ENCODE measurements at regions of chr1 and their contacts with region 1.

Region 1: GRCh38 chr1:28552758-28553663 is at the start of gene TRNAU1AP:
- DNase-seq: peak; percentile 98
- H3K4me3 Mint-ChIP-seq: peak within 1 kb of the TSS; percentile 99
- H3K27ac Mint-ChIP-seq: peak within 1 kb of the TSS; percentile 97
- H3K4me1 Mint-ChIP-seq: peaks cover 18% of the 10 kb centered on the region
- H3K27me3 Mint-ChIP-seq: no peaks in the 10 kb centered on the region
- total RNA-seq, gene TRNAU1AP: 40.2 and 41.0 TPM in 2 replicates

Region 2: DNA sequence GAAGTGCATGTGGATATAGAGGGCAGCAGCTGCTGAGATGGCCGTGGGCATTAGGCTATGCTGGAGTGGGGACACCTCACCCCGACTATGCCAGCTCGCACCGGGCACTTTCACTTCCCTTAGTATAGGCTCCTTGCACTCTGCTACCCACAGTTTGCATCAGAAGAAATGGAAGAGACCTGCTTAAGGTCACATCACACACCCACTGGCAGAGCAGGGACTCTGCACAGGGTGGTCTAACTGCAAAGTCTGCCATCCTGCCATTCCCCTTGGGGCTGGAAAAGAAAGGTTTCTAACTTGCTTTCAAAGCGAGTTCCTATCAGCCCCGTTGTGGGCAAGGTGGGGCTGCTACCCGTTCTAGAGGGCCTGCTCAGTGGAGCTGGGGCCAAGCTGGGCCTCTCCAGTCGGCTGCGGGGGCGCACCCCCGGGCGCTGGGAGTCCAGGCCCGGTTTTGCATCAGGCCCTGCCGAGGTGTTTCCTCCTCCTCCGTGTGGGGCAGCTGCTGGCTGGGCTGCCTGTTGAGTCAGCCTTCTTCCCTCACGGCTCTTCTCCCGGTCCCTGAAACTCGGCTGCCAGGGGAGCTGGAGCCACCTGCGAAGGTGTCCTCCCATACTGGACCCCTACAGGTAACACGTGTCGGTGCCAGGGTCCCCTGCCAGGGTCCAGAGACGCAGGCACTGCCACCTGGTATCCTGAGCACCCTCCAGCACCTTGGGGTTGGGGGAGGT is 1211.3 kb before region 1 on chr1 and contains the start of gene SYTL1:
- intact Hi-C with region 1: loop called (anchors 5 kb)
- DNase-seq: peak; percentile 63
- H3K4me3 Mint-ChIP-seq: peak within 1 kb of the TSS; percentile 93
- H3K27ac Mint-ChIP-seq: peak within 1 kb of the TSS; percentile 99
- H3K4me1 Mint-ChIP-seq: peaks cover 59% of the 10 kb centered on the region
- H3K27me3 Mint-ChIP-seq: no peaks in the 10 kb centered on the region
- total RNA-seq, gene SYTL1: 24.4 and 26.3 TPM in 2 replicates

Region 3: GRCh38 chr1:28369371-28370238 is 183.4 kb before region 1 on chr1 and contains the start of gene PHACTR4:
- intact Hi-C with region 1: loop called (anchors 1 kb)
- DNase-seq: peak; percentile 78
- H3K4me3 Mint-ChIP-seq: peak within 1 kb of the TSS; percentile 91
- H3K27ac Mint-ChIP-seq: peak within 1 kb of the TSS; percentile 95
- H3K4me1 Mint-ChIP-seq: peaks cover 36% of the 10 kb centered on the region
- H3K27me3 Mint-ChIP-seq: peaks cover 3% of the 10 kb centered on the region
- total RNA-seq, gene PHACTR4: 28.9 and 31.8 TPM in 2 replicates

Region 4: GRCh38 chr1:28518000-28518744 is 34.8 kb before region 1 on chr1:
- intact Hi-C with region 1: loop called (anchors 1 kb)
- DNase-seq: peak; percentile 86
- H3K4me3 Mint-ChIP-seq: peak overlapping the region; percentile 92
- H3K27ac Mint-ChIP-seq: peak overlapping the region; percentile 92
- H3K4me1 Mint-ChIP-seq: peaks cover 33% of the 10 kb centered on the region
- H3K27me3 Mint-ChIP-seq: no peaks in the 10 kb centered on the region

Region 5: GRCh38 chr1:28642847-28643635 is 90.0 kb after region 1 on chr1 and contains the start of gene TAF12:
- intact Hi-C with region 1: loop called (anchors 1 kb)
- DNase-seq: peak; percentile 85
- H3K4me3 Mint-ChIP-seq: peak within 1 kb of the TSS; percentile 99
- H3K27ac Mint-ChIP-seq: peak within 1 kb of the TSS; percentile 99
- H3K4me1 Mint-ChIP-seq: peaks cover 55% of the 10 kb centered on the region
- H3K27me3 Mint-ChIP-seq: no peaks in the 10 kb centered on the region
- total RNA-seq, gene TAF12: 32.8 and 33.9 TPM in 2 replicates

Region 6: DNA sequence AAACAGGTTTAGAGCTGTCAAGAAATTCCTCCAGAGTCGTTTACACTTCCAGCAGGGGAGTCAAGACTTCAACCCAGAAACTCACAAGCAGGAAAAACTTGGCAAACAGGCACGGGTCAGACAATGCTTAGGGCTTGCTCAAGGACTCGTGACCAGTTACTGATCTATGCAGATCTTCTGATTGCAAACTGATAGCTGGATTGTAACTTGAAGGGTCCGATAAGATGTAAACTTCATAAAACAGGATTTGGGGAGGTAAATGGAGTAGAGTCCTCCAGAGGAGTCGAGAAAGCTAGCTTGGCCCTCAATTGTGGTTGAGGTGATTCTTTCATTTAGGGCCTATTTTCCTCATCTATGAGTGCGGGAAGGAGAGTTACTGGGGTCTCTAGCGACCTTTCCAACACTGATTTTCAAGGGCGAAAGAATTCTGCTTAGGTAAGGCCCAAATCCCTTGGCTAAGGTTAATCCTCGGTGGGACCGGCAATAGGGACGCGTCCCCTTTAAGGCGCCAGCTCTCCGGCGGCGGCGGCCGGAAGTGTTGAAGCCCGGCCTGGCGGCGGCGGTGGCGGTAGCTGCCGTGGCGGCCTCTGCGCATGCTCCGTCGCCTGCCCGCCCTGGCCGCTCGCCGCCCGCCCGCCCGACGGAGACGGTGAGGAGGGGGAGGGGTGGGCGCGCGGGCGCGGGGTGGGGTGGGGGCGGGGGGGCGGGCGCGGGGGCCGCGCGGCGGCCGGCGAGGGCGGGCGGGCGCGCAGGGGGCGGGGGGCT is 115.4 kb after region 1 on chr1 and contains the start of gene GMEB1:
- intact Hi-C with region 1: loop called (anchors 1 kb)
- DNase-seq: peak; percentile 87
- H3K4me3 Mint-ChIP-seq: peak within 1 kb of the TSS; percentile 90
- H3K27ac Mint-ChIP-seq: peak within 1 kb of the TSS; percentile 98
- H3K4me1 Mint-ChIP-seq: peaks cover 11% of the 10 kb centered on the region
- H3K27me3 Mint-ChIP-seq: no peaks in the 10 kb centered on the region
- total RNA-seq, gene GMEB1: 27.2 and 30.3 TPM in 2 replicates

Region 7: GRCh38 chr1:28682840-28683239 is 129.8 kb after region 1 on chr1:
- intact Hi-C with region 1: no loop called
- DNase-seq: no peak
- H3K4me3 Mint-ChIP-seq: no peak overlapping the region
- H3K27ac Mint-ChIP-seq: no peak overlapping the region
- H3K4me1 Mint-ChIP-seq: no peaks in the 10 kb centered on the region
- H3K27me3 Mint-ChIP-seq: peaks cover 3% of the 10 kb centered on the region

Region 8: GRCh38 chr1:28877132-28877781 is 324.2 kb after region 1 on chr1:
- intact Hi-C with region 1: loop called (anchors 2 kb)
- DNase-seq: peak; percentile 54
- H3K4me3 Mint-ChIP-seq: no peak overlapping the region
- H3K27ac Mint-ChIP-seq: no peak overlapping the region
- H3K4me1 Mint-ChIP-seq: peaks cover 11% of the 10 kb centered on the region
- H3K27me3 Mint-ChIP-seq: peaks cover 5% of the 10 kb centered on the region